Mammary epithelial cell (primary cell): ENCODE measurements at regions of chr2 and their contacts with region 1.

Region 1: DNA sequence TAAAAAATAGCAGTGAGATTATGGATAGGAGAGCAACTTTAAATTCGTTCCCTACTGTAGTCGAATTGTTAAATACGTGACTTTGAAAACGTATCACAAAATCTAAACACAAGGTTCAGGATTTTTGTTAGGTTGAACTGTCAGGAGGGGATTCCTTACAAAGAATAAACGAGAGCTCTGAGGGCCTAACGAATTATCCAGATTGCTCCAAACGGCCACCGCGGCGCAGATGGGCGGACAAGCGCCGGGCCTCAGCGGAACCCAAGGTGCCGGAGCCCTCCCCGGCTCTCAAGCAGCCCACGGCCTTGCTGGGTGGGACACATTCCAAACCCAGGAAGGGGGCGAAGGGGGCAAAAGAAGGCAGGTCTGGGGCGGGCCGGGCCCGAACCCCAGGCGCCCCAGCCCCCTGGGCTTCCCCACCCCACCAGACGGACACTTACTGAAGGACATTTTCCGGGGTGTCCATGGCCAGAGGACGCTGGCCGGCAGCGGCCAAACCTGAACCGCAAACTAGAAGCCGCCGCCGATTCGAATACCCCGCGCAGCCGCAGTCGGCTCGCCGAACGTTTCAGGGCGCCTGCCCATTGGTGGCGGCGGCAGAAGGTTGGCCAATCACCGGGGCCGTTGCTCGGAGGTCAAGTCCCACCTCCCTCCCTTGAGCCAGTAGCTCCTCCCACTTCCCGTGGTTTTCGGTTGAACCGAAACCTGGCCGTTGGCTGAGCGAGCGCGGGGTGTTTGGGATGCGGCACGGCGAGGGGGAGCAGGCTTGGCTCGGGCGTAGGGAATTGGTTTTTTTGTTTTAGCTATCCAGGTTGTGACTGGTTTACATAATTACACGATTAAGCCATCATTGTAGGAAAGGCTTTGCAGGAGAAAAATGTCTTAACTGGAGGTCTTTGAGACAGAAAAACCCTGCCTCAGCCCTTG is at the start of gene BUB1:
- DNase-seq: peak; percentile 95
- H3K4me3 ChIP-seq: peak within 1 kb of the TSS; percentile 76 to 96 (median 87)
- H3K27ac ChIP-seq: peak within 1 kb of the TSS; percentile 96
- H3K4me1 ChIP-seq: peaks cover 27% of the 10 kb centered on the region
- H3K27me3 ChIP-seq: no peaks in the 10 kb centered on the region
- CTCF ChIP-seq: no peak
- total RNA-seq, gene BUB1: 2.7 to 35.5 TPM

Region 2: GRCh38 chr2:110639972-110640371 is 37.8 kb before region 1 on chr2:
- CTCF ChIA-PET with region 1: no interaction called
- dilution Hi-C with region 1: loop called (anchors 5 kb)
- in situ Hi-C with region 1: no loop called
- intact Hi-C with region 1: no loop called
- DNase-seq: no peak
- H3K4me3 ChIP-seq: no peak overlapping the region
- H3K27ac ChIP-seq: no peak overlapping the region
- H3K4me1 ChIP-seq: no peaks in the 10 kb centered on the region
- H3K27me3 ChIP-seq: no peaks in the 10 kb centered on the region
- CTCF ChIP-seq: no peak

Region 3: DNA sequence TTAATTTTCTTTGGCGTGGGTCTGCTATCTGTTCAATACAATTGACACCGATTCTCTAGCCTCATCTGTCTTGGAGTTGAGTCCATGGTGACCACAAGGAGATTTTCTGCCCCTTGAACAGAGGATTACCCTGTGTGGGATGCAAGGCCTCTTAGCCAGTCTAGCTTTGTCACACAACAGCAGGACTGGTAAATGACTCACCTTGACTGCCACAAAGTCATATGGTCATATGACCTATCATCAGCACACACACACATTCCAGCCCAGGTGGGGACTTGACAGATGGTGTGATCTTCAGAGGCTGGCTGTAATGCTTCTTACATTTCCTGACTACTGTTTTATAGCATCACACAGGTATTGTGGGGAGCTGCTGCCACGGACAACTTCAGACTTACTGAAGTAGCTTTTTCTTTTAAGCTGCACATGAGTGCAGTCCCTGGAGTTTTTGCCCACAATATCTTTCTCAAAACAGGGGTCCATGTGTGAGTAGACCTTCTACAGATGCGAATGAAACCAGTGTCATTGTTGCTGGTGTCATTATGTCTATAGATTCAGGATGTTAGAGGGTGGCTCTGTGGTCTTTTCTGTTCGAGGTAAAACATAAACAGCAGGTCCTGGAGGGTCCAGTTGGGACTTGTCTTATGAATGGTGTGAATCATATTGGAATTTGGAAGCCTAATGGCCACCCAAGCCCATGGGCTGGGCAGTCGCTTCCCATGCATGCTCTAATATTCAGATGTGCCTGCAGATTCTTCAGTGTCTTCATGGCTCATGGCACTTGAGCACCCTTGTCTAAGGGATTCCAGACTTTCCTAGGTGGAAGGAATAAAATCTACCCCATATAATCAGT is 35.9 kb after region 1 on chr2:
- CTCF ChIA-PET with region 1: no interaction called
- dilution Hi-C with region 1: no loop called
- in situ Hi-C with region 1: no loop called
- intact Hi-C with region 1: loop called (anchors 2 kb)
- DNase-seq: peak; percentile 57
- H3K4me3 ChIP-seq: no peak overlapping the region
- H3K27ac ChIP-seq: peak overlapping the region; percentile 41
- H3K4me1 ChIP-seq: peaks cover 29% of the 10 kb centered on the region
- H3K27me3 ChIP-seq: no peaks in the 10 kb centered on the region
- CTCF ChIP-seq: no peak

Region 4: GRCh38 chr2:110748489-110748867 is 70.7 kb after region 1 on chr2:
- CTCF ChIA-PET with region 1: no interaction called
- dilution Hi-C with region 1: loop called (anchors 5 kb)
- in situ Hi-C with region 1: no loop called
- intact Hi-C with region 1: no loop called
- DNase-seq: peak; percentile 73
- H3K4me3 ChIP-seq: no peak overlapping the region
- H3K27ac ChIP-seq: no peak overlapping the region
- H3K4me1 ChIP-seq: peaks cover 12% of the 10 kb centered on the region
- H3K27me3 ChIP-seq: no peaks in the 10 kb centered on the region
- CTCF ChIP-seq: no peak

Region 5: DNA sequence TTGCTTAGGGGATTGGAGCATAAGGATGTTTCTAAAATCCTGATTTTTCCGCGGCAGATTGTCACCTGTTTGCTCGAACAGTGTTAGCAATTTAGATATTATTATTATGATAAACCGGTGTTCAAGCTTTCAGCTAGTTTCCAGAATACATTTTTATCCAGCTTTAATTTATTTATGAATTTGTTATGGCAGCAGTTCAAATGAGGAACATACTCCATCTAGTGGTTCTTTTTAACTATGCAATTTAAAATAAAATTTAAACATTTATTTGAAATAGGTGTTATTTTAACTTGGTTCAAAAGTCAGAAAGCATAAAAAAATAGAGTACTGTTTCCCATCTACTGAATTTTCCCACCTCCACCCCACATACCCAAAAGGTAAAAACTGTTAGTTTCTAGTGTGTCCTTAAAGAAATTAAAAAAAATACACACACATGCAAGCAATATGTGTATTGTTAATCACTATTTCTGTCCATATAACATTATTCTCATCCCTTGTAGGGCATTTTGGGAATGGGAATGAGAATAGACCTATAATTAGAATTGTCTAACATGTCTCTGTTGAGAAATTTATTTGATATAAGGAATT is 77.8 kb after region 1 on chr2:
- CTCF ChIA-PET with region 1: interaction called, 6 read pairs
- dilution Hi-C with region 1: no loop called
- in situ Hi-C with region 1: no loop called
- intact Hi-C with region 1: loop called (anchors 1 kb)
- DNase-seq: no peak
- H3K4me3 ChIP-seq: no peak overlapping the region
- H3K27ac ChIP-seq: no peak overlapping the region
- H3K4me1 ChIP-seq: no peaks in the 10 kb centered on the region
- H3K27me3 ChIP-seq: no peaks in the 10 kb centered on the region
- CTCF ChIP-seq: peak; percentile 37 to 43

Region 6: GRCh38 chr2:110853507-110853906 is 175.7 kb after region 1 on chr2:
- CTCF ChIA-PET with region 1: no interaction called
- dilution Hi-C with region 1: no loop called
- in situ Hi-C with region 1: no loop called
- intact Hi-C with region 1: no loop called
- DNase-seq: no peak
- H3K4me3 ChIP-seq: no peak overlapping the region
- H3K27ac ChIP-seq: no peak overlapping the region
- H3K4me1 ChIP-seq: no peaks in the 10 kb centered on the region
- H3K27me3 ChIP-seq: no peaks in the 10 kb centered on the region
- CTCF ChIP-seq: peak; percentile 48 to 69

Region 7: DNA sequence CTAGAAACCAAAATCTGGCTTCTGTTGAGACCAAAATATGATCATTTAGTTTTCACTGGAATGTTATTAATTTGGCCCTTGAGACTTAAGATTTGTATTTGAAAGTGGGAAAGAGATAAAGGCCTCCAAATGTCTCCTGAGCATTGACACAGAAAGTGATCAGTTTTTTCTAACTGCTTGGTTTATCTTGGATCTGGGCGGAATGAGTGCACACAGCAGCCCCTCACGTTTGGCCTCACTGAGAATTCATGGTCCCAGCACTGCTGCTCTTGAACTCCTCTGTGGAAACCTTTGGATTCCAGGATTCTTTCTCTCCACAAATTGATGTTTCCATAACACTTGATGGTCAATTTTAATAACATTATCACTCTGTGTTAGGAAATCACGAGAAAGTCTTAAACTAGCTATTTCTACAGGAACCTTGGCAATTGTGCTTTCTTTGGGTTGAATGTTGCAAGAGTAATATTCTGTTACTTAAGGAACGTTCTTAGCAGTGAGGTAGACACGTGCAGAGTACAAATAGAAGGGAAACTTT is 262.6 kb after region 1 on chr2:
- CTCF ChIA-PET with region 1: no interaction called
- dilution Hi-C with region 1: no loop called
- in situ Hi-C with region 1: no loop called
- intact Hi-C with region 1: no loop called
- DNase-seq: no peak
- H3K4me3 ChIP-seq: no peak overlapping the region
- H3K27ac ChIP-seq: no peak overlapping the region
- H3K4me1 ChIP-seq: no peaks in the 10 kb centered on the region
- H3K27me3 ChIP-seq: peaks cover 5% of the 10 kb centered on the region
- CTCF ChIP-seq: no peak